Activated naive CD8-positive, alpha-beta T cell treated with anti-CD3 and anti-CD28 coated beads, Interleukin-2, amount 10 ng/mL, durations not matched to agents 7 days and 5 days (primary cell): ENCODE measurements at regions of chr3 and their contacts with region 1.

Region 1: DNA sequence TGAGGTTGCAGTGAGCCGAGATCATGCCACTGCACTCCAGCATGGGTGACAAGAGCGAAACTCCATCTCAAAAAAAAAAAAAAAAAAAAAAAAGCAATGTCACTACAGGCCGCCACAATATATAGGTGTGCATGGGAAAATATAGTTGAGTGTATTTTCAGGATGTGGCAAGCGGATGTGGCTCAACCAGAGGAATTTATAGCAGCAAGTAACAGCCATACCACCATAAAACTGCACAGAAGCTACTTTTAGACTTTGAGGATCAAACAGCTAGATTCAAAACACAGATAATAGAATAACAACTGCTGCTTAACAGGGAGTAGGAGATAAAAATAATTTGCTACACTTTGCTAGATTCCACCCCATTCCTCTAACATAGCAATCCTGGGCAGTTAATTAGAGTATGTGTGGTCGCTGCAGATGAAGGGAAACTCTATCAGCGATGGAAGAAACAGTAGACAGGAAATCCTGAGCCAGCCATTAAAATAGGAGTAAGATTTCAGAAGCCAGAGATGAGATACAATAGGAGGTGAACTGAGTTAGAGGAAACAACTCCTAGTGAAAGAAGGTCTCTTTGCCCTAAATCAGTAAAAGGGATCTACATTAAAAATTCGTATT is 318.7 kb upstream of the STT3B start:
- DNase-seq: no peak
- ATAC-seq: peak; percentile 84
- H3K4me3 Mint-ChIP-seq: peak overlapping the region; percentile 76
- H3K27ac Mint-ChIP-seq: peak overlapping the region; percentile 84
- H3K4me1 Mint-ChIP-seq: peaks cover 42% of the 10 kb centered on the region
- H3K27me3 Mint-ChIP-seq: no peaks in the 10 kb centered on the region

Region 2: GRCh38 chr3:31197941-31198340 is 16.0 kb before region 1 on chr3:
- POLR2A ChIA-PET with region 1: no interaction called
- DNase-seq: no peak
- ATAC-seq: no peak
- H3K4me3 Mint-ChIP-seq: no peak overlapping the region
- H3K27ac Mint-ChIP-seq: no peak overlapping the region
- H3K4me1 Mint-ChIP-seq: no peaks in the 10 kb centered on the region
- H3K27me3 Mint-ChIP-seq: no peaks in the 10 kb centered on the region

Region 3: DNA sequence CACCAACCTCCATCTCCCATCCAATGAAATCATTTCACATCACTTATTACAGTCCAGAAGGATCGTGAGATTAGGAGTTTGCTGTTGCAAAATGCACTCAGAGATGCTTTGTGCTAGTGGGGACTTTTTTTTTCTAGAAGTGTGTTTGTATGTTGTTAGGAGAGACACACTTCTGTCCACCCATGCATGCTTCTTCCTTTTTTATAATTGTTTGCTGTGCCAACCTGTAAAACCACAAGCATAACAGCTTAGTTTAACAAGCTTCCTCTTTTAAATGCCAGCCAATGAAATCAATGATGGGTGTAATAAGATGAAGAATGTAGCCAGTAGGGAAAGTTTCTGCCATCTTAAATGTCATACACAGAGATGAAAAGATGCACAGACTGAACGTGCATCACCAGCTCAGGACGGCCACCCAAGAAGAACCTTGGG is 13.2 kb after region 1 on chr3:
- POLR2A ChIA-PET with region 1: interaction called, 25 read pairs
- DNase-seq: no peak
- ATAC-seq: no peak
- H3K4me3 Mint-ChIP-seq: peak overlapping the region; percentile 76
- H3K27ac Mint-ChIP-seq: peak overlapping the region; percentile 88
- H3K4me1 Mint-ChIP-seq: peaks cover 60% of the 10 kb centered on the region
- H3K27me3 Mint-ChIP-seq: no peaks in the 10 kb centered on the region

Region 4: DNA sequence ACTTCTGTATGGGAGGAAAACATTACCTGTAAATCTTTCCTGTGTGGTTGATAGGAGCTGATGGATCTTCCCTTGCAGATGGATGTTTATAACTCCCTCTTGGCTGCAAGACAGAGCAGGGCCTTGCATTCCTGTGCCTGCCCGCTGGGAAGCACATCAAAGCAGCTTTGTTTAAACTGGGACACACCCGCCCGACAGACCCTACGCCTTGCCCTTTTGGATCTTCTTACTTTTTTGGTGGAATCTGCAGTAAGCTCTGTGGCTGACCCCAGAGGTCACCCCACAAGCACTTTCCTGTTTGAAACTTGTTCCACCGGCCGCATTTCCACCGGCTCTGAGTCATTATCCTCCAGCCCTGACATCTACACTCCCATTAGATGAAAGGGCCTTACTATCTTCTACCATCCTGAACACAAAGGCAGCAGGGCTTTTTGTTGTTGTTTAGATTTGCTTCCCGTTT is 74.7 kb after region 1 on chr3:
- POLR2A ChIA-PET with region 1: no interaction called
- DNase-seq: peak; percentile 34
- ATAC-seq: peak; percentile 56
- H3K4me3 Mint-ChIP-seq: peak overlapping the region; percentile 8
- H3K27ac Mint-ChIP-seq: no peak overlapping the region
- H3K4me1 Mint-ChIP-seq: peaks cover 13% of the 10 kb centered on the region
- H3K27me3 Mint-ChIP-seq: no peaks in the 10 kb centered on the region

Region 5: GRCh38 chr3:31300455-31301443 is 86.8 kb after region 1 on chr3:
- POLR2A ChIA-PET with region 1: no interaction called
- DNase-seq: no peak
- ATAC-seq: no peak
- H3K4me3 Mint-ChIP-seq: no peak overlapping the region
- H3K27ac Mint-ChIP-seq: no peak overlapping the region
- H3K4me1 Mint-ChIP-seq: peaks cover 1% of the 10 kb centered on the region
- H3K27me3 Mint-ChIP-seq: no peaks in the 10 kb centered on the region